Uterus (tissue), 4 donors: ENCODE measurements at regions of chr11 and their contacts with region 1.

Region 1: GRCh38 chr11:6353367-6353987 is 33.2 kb upstream of the CAVIN3 start:
- DNase-seq: peak; percentile 51 to 53
- H3K4me3 ChIP-seq: no peak overlapping the region
- H3K27ac ChIP-seq: no peak overlapping the region
- H3K4me1 ChIP-seq: peaks cover 0 to 6% of the 10 kb centered on the region in 2 donors
- H3K27me3 ChIP-seq: no peaks in the 10 kb centered on the region
- CTCF ChIP-seq: peak; percentile 90 to 94 (median 90)
- POLR2A ChIP-seq: no peak

Region 2: DNA sequence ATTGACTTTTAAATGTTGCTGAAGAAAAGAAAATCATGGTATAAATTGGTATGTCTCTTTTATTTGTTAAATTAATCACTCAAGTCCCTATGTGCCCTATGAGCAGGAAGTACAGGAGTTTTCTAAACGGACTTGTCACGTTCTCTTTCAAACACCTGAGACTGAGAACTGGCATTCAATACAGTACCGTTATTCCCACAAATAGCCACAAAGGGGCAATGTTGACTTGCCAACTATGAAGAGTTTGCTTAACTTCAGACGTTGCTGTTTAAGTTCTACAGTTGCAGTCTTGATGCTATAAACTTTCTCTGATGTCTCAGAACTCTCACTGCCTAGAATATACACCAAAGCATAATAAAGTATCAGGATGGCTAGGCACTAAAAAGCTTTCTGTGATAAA is 330.5 kb before region 1 on chr11:
- intact Hi-C with region 1: loop called (anchors 10 kb)
- DNase-seq: no peak
- H3K4me3 ChIP-seq: no peak overlapping the region
- H3K27ac ChIP-seq: no peak overlapping the region
- H3K4me1 ChIP-seq: no peaks in the 10 kb centered on the region
- H3K27me3 ChIP-seq: no peaks in the 10 kb centered on the region
- CTCF ChIP-seq: peak; percentile 37 to 52 (median 45)
- POLR2A ChIP-seq: no peak

Region 3: DNA sequence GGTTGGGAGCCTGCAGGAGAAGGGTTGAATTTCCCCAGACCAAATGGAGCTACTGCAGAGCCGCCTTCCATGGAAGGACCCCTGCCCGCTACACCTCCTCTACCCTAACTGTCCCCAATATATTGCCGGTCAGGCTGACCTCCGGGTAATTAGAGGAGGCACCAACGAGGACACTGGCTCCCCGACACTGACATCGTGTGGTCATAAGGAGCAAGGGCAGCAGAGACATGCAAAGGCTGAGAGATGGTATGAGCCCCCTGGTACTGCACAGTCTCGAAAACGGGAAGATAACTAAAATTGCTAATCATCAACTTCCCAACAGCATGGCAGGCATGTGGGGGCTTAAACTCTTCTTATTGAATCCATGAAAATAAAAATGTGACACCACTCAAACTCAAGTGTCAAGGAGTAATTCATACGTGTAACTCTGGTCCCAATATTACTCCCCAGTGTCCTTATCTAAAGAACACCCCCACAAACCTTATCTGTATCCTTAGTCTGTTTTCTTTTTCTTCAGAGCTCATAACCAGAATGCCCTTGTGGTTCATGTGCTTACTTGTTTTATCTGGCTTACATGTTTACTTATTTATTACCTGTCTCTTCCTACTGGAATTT is 37.6 kb before region 1 on chr11:
- intact Hi-C with region 1: loop called (anchors 5 kb)
- DNase-seq: peak; percentile 59 to 65
- H3K4me3 ChIP-seq: peak overlapping the region in 1 of 2 donors; percentile 18
- H3K27ac ChIP-seq: peak overlapping the region; percentile 94 to 99
- H3K4me1 ChIP-seq: no peaks in the 10 kb centered on the region
- H3K27me3 ChIP-seq: no peaks in the 10 kb centered on the region
- CTCF ChIP-seq: peak; percentile 70 to 87 (median 78)
- POLR2A ChIP-seq: no peak